CD8-positive, alpha-beta T cell (primary cell): ENCODE measurements at regions of chr7 and their contacts with region 1.

Region 1: GRCh38 chr7:27662490-27663205 is at the start of gene HIBADH:
- DNase-seq: peak; percentile 90 to 99 (median 94)
- ATAC-seq: peak; percentile 92
- H3K4me3 ChIP-seq: peak within 1 kb of the TSS; percentile 70 to 97
- H3K4me3 Mint-ChIP-seq: peak within 1 kb of the TSS; percentile 88
- H3K27ac ChIP-seq: peak within 1 kb of the TSS; percentile 79 to 84
- H3K27ac Mint-ChIP-seq: peak within 1 kb of the TSS; percentile 94
- H3K4me1 ChIP-seq: peaks cover 20% of the 10 kb centered on the region
- H3K4me1 Mint-ChIP-seq: peaks cover 33% of the 10 kb centered on the region
- H3K27me3 ChIP-seq: no peaks in the 10 kb centered on the region
- H3K27me3 Mint-ChIP-seq: no peaks in the 10 kb centered on the region
- CTCF ChIP-seq: no peak
- total RNA-seq, gene HIBADH: 6.8 to 7.3 TPM

Region 2: DNA sequence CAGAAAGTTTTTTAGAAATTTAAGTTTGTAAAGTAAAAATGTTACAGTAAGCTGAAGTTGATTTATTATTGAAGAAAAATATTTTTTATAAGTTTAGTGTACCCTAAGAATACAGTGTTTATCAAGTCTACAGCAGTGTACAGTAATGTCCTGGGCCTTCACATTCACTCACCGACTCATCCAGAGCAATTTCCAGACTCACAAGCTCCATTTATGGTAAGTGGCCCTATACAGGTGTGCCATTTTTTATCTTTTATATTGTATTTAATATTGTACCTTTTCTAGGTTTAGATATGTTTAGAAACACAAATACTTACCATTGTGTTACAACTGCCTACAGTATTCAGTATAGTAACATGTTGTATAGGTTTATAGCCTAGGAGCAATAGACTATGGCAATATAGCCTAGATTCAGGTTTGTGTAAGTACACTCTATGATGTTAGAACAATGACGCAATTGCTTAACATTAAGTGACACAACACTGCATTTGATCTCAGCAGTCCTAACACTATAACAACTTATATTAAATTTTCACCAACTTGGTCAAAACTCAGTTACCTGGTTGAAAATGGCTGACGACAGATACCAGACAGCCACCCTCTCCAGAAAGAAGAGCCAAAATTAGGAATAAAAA is 45.6 kb before region 1 on chr7:
- CTCF ChIA-PET with region 1: no interaction called
- POLR2A ChIA-PET with region 1: no interaction called
- intact Hi-C with region 1: no loop called
- DNase-seq: no peak
- ATAC-seq: no peak
- H3K4me3 ChIP-seq: no peak overlapping the region
- H3K4me3 Mint-ChIP-seq: no peak overlapping the region
- H3K27ac ChIP-seq: no peak overlapping the region
- H3K27ac Mint-ChIP-seq: no peak overlapping the region
- H3K4me1 ChIP-seq: no peaks in the 10 kb centered on the region
- H3K4me1 Mint-ChIP-seq: no peaks in the 10 kb centered on the region
- H3K27me3 ChIP-seq: no peaks in the 10 kb centered on the region
- H3K27me3 Mint-ChIP-seq: no peaks in the 10 kb centered on the region
- CTCF ChIP-seq: no peak

Region 3: DNA sequence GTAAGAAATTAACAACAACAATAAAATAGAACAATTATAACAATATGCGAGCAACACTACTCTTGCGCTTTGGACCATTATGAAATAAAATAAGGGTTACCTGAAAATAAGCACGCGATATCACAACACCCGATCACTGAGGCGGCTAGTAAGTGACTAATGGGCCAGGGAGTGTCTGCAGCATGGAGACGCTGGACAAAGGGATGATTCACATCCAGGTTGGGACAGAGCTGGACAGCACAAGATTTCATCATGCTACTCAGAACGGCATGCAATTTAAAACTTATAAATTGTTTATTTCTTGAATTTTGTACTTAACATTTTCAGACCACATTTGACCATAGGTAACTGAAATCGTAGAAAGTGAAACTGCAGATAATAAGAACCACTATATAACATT is 15.6 kb before region 1 on chr7:
- CTCF ChIA-PET with region 1: no interaction called
- POLR2A ChIA-PET with region 1: no interaction called
- intact Hi-C with region 1: no loop called
- DNase-seq: no peak
- ATAC-seq: no peak
- H3K4me3 ChIP-seq: no peak overlapping the region
- H3K4me3 Mint-ChIP-seq: no peak overlapping the region
- H3K27ac ChIP-seq: no peak overlapping the region
- H3K27ac Mint-ChIP-seq: no peak overlapping the region
- H3K4me1 ChIP-seq: no peaks in the 10 kb centered on the region
- H3K4me1 Mint-ChIP-seq: peaks cover 10% of the 10 kb centered on the region
- H3K27me3 ChIP-seq: no peaks in the 10 kb centered on the region
- H3K27me3 Mint-ChIP-seq: no peaks in the 10 kb centered on the region
- CTCF ChIP-seq: no peak

Region 4: GRCh38 chr7:27784393-27785053 is 121.9 kb after region 1 on chr7:
- CTCF ChIA-PET with region 1: interaction called, 3 read pairs
- POLR2A ChIA-PET with region 1: interaction called, 3 read pairs
- intact Hi-C with region 1: loop called in 1 of 2 experiments (anchors 1 kb)
- DNase-seq: peak in 3 of 9 experiments; percentile 23 to 69 (median 61)
- ATAC-seq: peak; percentile 64
- H3K4me3 ChIP-seq: no peak overlapping the region
- H3K4me3 Mint-ChIP-seq: no peak overlapping the region
- H3K27ac ChIP-seq: no peak overlapping the region
- H3K27ac Mint-ChIP-seq: peak overlapping the region; percentile 4
- H3K4me1 ChIP-seq: no peaks in the 10 kb centered on the region
- H3K4me1 Mint-ChIP-seq: peaks cover 12% of the 10 kb centered on the region
- H3K27me3 ChIP-seq: no peaks in the 10 kb centered on the region
- H3K27me3 Mint-ChIP-seq: no peaks in the 10 kb centered on the region
- CTCF ChIP-seq: peak; percentile 80

Region 5: GRCh38 chr7:28179120-28180030 is 516.7 kb after region 1 on chr7:
- CTCF ChIA-PET with region 1: no interaction called
- POLR2A ChIA-PET with region 1: no interaction called
- intact Hi-C with region 1: loop called (anchors 2 to 10 kb)
- DNase-seq: peak; percentile 45 to 88 (median 74)
- ATAC-seq: peak; percentile 70
- H3K4me3 ChIP-seq: peak overlapping the region; percentile 27 to 38
- H3K4me3 Mint-ChIP-seq: peak overlapping the region; percentile 82
- H3K27ac ChIP-seq: peak overlapping the region; percentile 12 to 21
- H3K27ac Mint-ChIP-seq: peak overlapping the region; percentile 60
- H3K4me1 ChIP-seq: peaks cover 7% of the 10 kb centered on the region
- H3K4me1 Mint-ChIP-seq: peaks cover 15% of the 10 kb centered on the region
- H3K27me3 ChIP-seq: no peaks in the 10 kb centered on the region
- H3K27me3 Mint-ChIP-seq: no peaks in the 10 kb centered on the region
- CTCF ChIP-seq: no peak